ENCODE measurements at regions of chr15 and their contacts with region 1.

Region 1: DNA sequence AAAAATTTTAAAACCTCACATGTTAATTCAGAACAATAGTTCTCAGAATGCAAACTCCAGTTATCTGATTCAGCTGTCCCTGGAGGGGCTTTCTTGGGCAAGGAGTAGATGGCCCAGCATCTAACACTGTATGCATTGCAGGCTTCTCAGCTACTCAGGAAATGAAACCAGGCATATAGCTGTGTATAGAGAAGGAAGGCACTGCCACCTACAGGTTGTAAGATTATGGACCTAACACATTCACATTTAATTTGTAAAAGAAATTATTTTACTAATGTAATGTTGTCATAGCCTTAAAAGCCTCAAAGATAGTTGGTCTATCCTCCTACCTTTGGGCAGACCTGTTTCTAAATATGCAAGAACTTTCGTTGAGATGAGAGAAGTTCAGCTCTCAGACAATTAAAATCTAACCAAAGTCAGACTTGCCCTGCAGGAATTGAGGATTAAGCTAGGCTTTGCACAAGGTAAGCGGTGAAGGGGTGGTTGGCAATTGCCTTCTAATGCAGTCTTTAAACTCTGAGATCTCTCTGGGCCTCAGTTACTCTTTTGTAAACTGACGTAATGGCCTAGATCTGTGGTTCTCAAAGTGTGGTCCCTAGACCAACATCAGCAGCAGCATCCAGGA is 132.8 kb upstream of the SLC24A5 start:
- DNase-seq: peak; percentile 45 to 70
- H3K4me3 ChIP-seq: no peak overlapping the region
- H3K4me1 ChIP-seq: no peaks in the 10 kb centered on the region
- H3K27me3 ChIP-seq: no peaks in the 10 kb centered on the region; the same call in 1 of the 2 replicates

Region 2: GRCh38 chr15:47717036-47717611 is 270.9 kb before region 1 on chr15 and contains the start of gene SEMA6D:
- in situ Hi-C with region 1: loop called (anchors 25 kb)
- DNase-seq: peak; percentile 87 to 90
- H3K4me3 ChIP-seq: peak within 1 kb of the TSS; percentile 53
- H3K4me1 ChIP-seq: peaks cover 29% of the 10 kb centered on the region
- H3K27me3 ChIP-seq: no peaks in the 10 kb centered on the region

Region 3: DNA sequence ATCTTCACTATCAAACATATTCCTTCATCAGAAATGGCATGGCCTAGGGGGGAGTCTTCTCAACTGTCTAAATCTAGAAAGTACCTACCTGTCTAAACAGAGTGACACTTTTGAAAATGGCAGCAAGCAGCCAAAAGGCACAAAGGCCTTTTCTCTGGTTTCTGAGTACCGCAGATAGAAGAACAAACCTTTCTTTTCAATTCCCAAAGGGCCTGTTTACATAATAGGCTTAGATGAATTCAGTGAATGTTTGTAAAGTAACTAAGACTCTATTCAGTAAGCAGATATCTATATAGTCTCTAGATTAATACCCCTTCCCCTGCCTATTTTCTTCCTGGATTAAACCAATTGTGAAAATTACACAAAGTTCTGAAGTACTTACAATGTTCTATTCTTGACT is 183.0 kb after region 1 on chr15:
- in situ Hi-C with region 1: no loop called
- DNase-seq: peak; percentile 24 to 89
- H3K4me3 ChIP-seq: no peak overlapping the region
- H3K4me1 ChIP-seq: peaks cover 10% of the 10 kb centered on the region
- H3K27me3 ChIP-seq: no peaks in the 10 kb centered on the region